H1 (cell line): ENCODE measurements at regions of chr2 and their contacts with region 1.

Region 1: GRCh38 chr2:118221666-118222594 is 133.7 kb downstream of the INSIG2 start:
- DNase-seq: peak in 1 of 2 experiments; percentile 52
- H3K4me3 ChIP-seq: no peak overlapping the region
- H3K27ac ChIP-seq: no peak overlapping the region
- H3K4me1 ChIP-seq: peaks cover 0 to 7% (median 5%) of the 10 kb centered on the region in 4 experiments; a peak in 5 of 7 replicates
- H3K27me3 ChIP-seq: peaks cover 0 to 22% (median 16%) of the 10 kb centered on the region in 4 experiments; a peak in 6 of 7 replicates
- CTCF ChIP-seq: peak in 2 of 3 experiments; percentile 68; a peak in 3 of 4 replicates
- EP300 ChIP-seq: no peak
- POLR2A ChIP-seq: no peak
- RAD21 ChIP-seq: peak; percentile 91 to 94

Region 2: GRCh38 chr2:118207889-118208288 is 14.0 kb before region 1 on chr2:
- CTCF ChIA-PET with region 1: interaction called, 18 read pairs
- POLR2A ChIA-PET with region 1: interaction called, 3 read pairs
- DNase-seq: no peak
- H3K4me3 ChIP-seq: no peak overlapping the region
- H3K27ac ChIP-seq: no peak overlapping the region
- H3K4me1 ChIP-seq: no peaks in the 10 kb centered on the region
- H3K27me3 ChIP-seq: peaks cover 0 to 2% (median 0%) of the 10 kb centered on the region in 4 experiments; a peak in 1 of 7 replicates
- CTCF ChIP-seq: no peak
- EP300 ChIP-seq: no peak
- POLR2A ChIP-seq: no peak
- RAD21 ChIP-seq: no peak

Region 3: DNA sequence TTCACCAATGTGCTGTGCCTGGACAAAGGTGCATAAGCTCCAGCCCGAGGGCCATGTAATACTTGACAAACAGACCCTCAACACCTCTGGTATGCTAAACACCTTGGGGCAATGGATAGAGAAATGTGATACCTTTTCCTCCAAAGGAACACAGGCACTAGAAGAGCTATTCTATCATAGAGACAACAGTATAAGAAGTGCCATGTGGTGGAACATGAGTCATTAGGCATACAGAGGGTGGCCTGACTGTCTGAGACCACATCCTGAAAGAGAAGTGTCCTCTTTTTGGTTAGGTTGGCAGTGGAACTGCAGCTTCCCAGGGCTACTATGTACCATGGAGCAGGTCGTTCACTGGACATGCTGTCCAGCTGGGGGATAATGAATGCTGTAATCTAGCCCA is 20.3 kb after region 1 on chr2:
- CTCF ChIA-PET with region 1: interaction called, 16 read pairs
- POLR2A ChIA-PET with region 1: no interaction called
- DNase-seq: no peak
- H3K4me3 ChIP-seq: no peak overlapping the region
- H3K27ac ChIP-seq: no peak overlapping the region
- H3K4me1 ChIP-seq: no peaks in the 10 kb centered on the region
- H3K27me3 ChIP-seq: no peaks in the 10 kb centered on the region; a peak in 2 of 7 replicates
- CTCF ChIP-seq: no peak
- EP300 ChIP-seq: no peak
- POLR2A ChIP-seq: no peak
- RAD21 ChIP-seq: no peak

Region 4: GRCh38 chr2:118278046-118278445 is 56.1 kb after region 1 on chr2:
- CTCF ChIA-PET with region 1: interaction called, 12 read pairs
- POLR2A ChIA-PET with region 1: interaction called, 4 read pairs
- DNase-seq: no peak
- H3K4me3 ChIP-seq: no peak overlapping the region
- H3K27ac ChIP-seq: no peak overlapping the region
- H3K4me1 ChIP-seq: peaks cover 0 to 4% (median 2%) of the 10 kb centered on the region in 4 experiments; a peak in 2 of 7 replicates
- H3K27me3 ChIP-seq: no peaks in the 10 kb centered on the region; a peak in 2 of 7 replicates
- CTCF ChIP-seq: peak in 2 of 3 experiments; percentile 14 to 40; a peak in 1 of 4 replicates
- EP300 ChIP-seq: no peak
- POLR2A ChIP-seq: no peak
- RAD21 ChIP-seq: peak in 1 of 2 experiments; percentile 45; a peak in 2 of 4 replicates

Region 5: DNA sequence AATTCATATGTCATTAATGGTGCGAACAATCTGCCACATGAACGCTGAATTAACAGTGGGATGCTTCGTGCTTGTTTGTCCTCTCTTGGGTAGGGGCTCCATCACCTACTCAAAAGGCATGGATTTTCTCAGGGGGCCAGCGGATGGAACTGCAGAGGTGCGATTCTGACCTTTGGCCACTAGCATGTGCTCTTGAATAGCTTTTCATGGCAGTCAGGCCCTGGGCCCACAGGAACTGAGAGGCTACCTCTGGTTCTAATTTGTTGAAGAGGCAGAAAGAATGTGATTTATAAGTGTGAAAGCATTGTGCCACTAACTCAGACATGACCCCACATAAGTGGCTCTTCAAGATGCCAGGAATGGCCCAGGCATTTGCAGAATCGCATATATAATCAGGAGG is 149.6 kb after region 1 on chr2:
- CTCF ChIA-PET with region 1: interaction called, 12 read pairs
- POLR2A ChIA-PET with region 1: no interaction called
- DNase-seq: peak; percentile 38 to 62
- H3K4me3 ChIP-seq: no peak overlapping the region
- H3K27ac ChIP-seq: no peak overlapping the region
- H3K4me1 ChIP-seq: peaks cover 3 to 7% (median 5%) of the 10 kb centered on the region in 4 experiments; a peak in 4 of 7 replicates
- H3K27me3 ChIP-seq: peaks cover 0 to 3% (median 0%) of the 10 kb centered on the region in 4 experiments; a peak in 2 of 7 replicates
- CTCF ChIP-seq: peak; percentile 80 to 96 (median 82)
- EP300 ChIP-seq: no peak
- POLR2A ChIP-seq: no peak
- RAD21 ChIP-seq: peak; percentile 99